PC-3 (cell line): ENCODE measurements at regions of chr6 and their contacts with region 1.

Region 1: DNA sequence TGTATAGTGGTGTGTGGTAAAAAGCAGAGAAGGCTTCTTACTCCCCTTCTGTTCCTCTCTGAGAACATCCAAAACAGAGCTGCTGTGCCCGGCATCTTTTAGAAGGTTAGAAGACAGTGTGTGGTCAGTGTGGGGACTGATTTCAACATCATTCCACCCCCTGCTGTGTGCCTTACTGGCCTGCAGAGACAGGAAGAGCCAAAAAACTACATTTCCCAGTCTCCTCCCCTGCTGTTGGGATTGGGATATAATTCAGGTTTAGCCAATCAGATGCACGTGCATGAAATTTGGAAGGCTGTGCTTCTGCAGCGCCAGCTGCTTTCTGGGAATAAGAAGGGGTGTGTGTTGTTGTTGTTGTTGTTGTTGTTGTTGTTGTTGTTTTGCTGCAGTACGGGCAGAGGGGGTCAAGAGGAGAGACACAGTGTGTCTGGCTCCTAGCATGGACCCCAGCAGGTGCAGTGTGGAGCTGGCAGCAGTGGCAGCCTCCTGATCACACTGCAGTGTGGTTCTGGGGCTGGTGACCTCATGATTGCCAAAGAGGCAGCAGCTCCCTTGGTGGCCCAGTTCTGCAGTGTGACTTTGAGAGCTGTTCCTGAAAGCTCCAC is 74.7 kb downstream of the MRPL14 start:
- DNase-seq: peak; percentile 56
- ATAC-seq: no peak
- H3K4me3 ChIP-seq: no peak overlapping the region
- H3K27ac ChIP-seq: peak overlapping the region; percentile 96
- H3K4me1 ChIP-seq: peaks cover 86% of the 10 kb centered on the region
- H3K27me3 ChIP-seq: no peaks in the 10 kb centered on the region
- CTCF ChIP-seq: no peak

Region 2: GRCh38 chr6:44010411-44011349 is 41.8 kb before region 1 on chr6:
- CTCF ChIA-PET with region 1: no interaction called
- POLR2A ChIA-PET with region 1: no interaction called
- intact Hi-C with region 1: loop called (anchors 5 kb)
- DNase-seq: peak; percentile 91
- ATAC-seq: peak; percentile 93
- H3K4me3 ChIP-seq: no peak overlapping the region
- H3K27ac ChIP-seq: peak overlapping the region; percentile 89
- H3K4me1 ChIP-seq: peaks cover 26% of the 10 kb centered on the region
- H3K27me3 ChIP-seq: no peaks in the 10 kb centered on the region
- CTCF ChIP-seq: no peak